Posterior vena cava (tissue), 2 donors: ENCODE measurements at regions of chr15 and their contacts with region 1.

Region 1: DNA sequence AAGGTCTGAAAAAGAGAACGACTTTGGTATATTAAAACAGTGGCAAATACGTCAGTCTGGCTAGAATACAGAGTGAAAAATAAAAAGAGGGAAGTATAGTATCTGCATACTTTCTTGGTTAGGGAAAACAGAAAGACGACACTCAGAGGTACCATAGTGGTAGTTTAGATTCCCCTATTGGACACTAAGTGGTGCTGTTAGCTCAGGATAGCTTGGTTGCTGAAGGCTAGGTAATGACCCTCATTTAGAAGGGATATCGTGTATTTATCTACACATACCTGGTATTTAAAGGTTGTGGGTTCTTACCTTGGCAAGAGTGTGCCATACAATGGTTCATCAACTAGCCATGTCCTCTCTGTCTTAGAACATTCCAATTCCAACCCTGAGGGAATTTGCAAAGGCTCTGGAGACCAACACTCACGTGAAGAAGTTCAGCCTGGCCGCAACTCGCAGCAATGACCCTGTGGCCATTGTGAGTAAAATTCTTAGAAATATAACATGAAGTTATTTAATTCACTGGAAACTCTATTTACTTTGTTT is 31.0 kb downstream of the TMOD2 start:
- DNase-seq: no peak

Region 2: DNA sequence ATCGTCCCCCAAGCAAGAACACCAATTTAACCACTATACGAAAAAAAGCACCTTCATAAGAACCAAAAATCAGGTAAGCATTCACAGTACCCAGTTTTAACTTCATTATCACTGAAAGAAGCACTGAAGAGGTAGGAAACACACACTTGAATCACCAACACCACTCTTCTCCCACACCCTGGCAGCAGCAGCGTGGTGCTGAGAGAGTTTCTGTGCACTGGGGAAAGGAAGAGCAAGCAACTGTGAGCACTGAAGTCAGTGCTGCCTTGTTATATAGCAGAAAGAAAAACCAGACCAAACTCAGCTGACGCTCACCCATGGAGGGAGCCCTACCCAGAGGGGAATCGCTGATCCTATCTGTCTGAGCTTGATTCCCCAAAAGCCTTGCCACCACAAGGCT is 258.1 kb before region 1 on chr15:
- intact Hi-C with region 1: no loop called
- DNase-seq: no peak

Region 3: GRCh38 chr15:51842852-51843737 is 60.7 kb after region 1 on chr15:
- intact Hi-C with region 1: loop called in 1 of 2 experiments (anchors 2 kb)
- DNase-seq: no peak